Activated naive CD8-positive, alpha-beta T cell treated with anti-CD3 and anti-CD28 coated beads, Interleukin-2, amount 10 ng/mL, durations not matched to agents 7 days and 5 days (primary cell): ENCODE measurements at regions of chr2 and their contacts with region 1.

Region 1: DNA sequence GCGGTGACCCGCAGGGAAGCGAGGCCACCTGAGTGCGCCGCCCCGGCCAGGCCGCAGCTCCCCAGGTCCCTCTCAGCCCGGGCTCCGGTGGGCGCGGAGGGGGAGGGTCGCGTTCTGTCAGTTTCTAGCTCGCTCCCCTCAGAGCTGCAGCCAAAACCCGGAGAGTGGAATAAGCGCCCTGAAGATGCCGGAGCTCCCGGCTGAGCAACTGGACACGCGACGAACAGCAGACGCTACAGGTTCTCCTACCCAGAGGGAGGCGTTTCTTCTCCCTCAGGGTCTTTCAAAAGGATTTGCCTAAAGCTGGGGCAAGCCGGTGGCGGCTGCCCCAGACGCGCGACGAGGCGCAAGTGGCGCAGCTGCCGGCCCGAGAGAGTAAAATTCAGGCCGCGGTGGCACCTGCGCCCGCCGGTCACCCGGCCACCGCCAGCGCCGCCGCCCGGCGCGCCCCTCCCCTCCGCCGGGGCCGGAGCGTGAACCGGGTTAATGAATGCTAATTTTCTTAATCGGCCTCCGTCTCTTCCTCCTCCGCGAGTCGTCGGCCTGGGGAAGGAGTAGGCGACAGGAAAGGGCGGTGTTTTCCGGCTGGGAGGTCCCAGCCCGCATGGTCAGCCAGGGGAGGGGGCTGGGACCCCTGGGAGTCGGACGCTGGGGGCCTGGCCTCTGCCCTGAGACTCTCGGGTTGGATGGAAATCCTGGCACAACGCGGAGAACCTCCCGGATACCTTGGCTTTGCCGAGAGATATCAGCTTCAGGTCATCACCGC is 845 bp upstream of the CDC42EP3 start:
- DNase-seq: peak; percentile 78
- ATAC-seq: peak; percentile 37
- H3K4me3 Mint-ChIP-seq: peak overlapping the region; percentile 81
- H3K27ac Mint-ChIP-seq: peak overlapping the region; percentile 84
- H3K4me1 Mint-ChIP-seq: peaks cover 30% of the 10 kb centered on the region
- H3K27me3 Mint-ChIP-seq: peaks cover 2% of the 10 kb centered on the region

Region 2: GRCh38 chr2:37623971-37624900 is 48.1 kb before region 1 on chr2:
- POLR2A ChIA-PET with region 1: interaction called, 15 read pairs
- DNase-seq: no peak
- ATAC-seq: peak; percentile 60
- H3K4me3 Mint-ChIP-seq: peak overlapping the region; percentile 42
- H3K27ac Mint-ChIP-seq: peak overlapping the region; percentile 31
- H3K4me1 Mint-ChIP-seq: peaks cover 33% of the 10 kb centered on the region
- H3K27me3 Mint-ChIP-seq: no peaks in the 10 kb centered on the region

Region 3: DNA sequence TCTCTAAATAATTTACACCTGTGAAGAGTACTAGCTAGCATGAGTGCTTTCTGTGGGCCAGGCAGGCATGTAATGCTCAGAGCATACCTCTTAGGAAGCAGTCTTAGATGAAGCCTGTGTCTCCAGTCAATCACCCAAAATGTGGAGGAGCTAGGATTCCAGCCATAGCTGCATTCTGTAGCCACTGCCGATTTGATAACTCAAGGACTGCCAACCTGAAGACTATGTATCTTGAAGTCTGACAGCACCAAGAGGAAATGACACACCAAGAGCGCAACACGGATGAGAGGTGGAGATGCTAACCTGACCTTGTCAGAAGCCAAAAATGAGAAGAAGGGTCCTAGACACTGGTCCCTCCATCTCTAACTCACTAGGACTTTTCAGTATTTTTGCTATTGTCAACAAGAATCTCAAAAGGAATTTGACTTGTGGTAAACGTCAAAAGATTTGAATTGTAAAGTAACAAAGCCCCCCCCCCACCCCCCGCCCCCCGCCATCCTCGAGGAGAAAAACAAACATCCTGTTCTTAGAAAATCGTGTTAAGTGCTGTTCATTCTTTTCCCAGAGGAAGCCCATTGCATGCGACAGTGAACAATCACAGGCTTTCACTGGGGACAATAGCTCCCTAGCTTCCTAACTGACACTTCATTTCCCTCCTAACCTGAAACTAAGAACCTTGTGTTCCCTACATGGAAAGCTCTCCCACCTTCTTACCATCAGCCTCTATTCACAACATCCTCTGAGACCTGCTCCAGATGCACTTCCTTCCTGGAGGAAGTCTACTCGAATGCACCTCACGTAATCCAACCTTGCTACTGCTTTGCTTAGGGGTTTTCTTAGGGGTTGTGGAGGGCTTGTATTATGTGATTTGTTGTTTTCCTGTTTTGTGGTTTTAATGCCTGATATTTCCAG is 15.5 kb before region 1 on chr2:
- POLR2A ChIA-PET with region 1: interaction called, 11 read pairs
- DNase-seq: no peak
- ATAC-seq: peak; percentile 55
- H3K4me3 Mint-ChIP-seq: peak overlapping the region; percentile 59
- H3K27ac Mint-ChIP-seq: peak overlapping the region; percentile 86
- H3K4me1 Mint-ChIP-seq: peaks cover 52% of the 10 kb centered on the region
- H3K27me3 Mint-ChIP-seq: no peaks in the 10 kb centered on the region

Region 4: GRCh38 chr2:37683921-37684780 is 11.9 kb after region 1 on chr2:
- POLR2A ChIA-PET with region 1: interaction called, 11 read pairs
- DNase-seq: no peak
- ATAC-seq: peak; percentile 100
- H3K4me3 Mint-ChIP-seq: peak overlapping the region; percentile 66
- H3K27ac Mint-ChIP-seq: peak overlapping the region; percentile 96
- H3K4me1 Mint-ChIP-seq: peaks cover 23% of the 10 kb centered on the region
- H3K27me3 Mint-ChIP-seq: no peaks in the 10 kb centered on the region

Region 5: GRCh38 chr2:37711308-37711731 is 39.0 kb after region 1 on chr2:
- POLR2A ChIA-PET with region 1: interaction called, 22 read pairs
- DNase-seq: peak; percentile 70
- ATAC-seq: peak; percentile 98
- H3K4me3 Mint-ChIP-seq: peak overlapping the region; percentile 60
- H3K27ac Mint-ChIP-seq: peak overlapping the region; percentile 84
- H3K4me1 Mint-ChIP-seq: peaks cover 50% of the 10 kb centered on the region
- H3K27me3 Mint-ChIP-seq: no peaks in the 10 kb centered on the region